ENCODE measurements at regions of chr6 and their contacts with region 1.

Region 1: DNA sequence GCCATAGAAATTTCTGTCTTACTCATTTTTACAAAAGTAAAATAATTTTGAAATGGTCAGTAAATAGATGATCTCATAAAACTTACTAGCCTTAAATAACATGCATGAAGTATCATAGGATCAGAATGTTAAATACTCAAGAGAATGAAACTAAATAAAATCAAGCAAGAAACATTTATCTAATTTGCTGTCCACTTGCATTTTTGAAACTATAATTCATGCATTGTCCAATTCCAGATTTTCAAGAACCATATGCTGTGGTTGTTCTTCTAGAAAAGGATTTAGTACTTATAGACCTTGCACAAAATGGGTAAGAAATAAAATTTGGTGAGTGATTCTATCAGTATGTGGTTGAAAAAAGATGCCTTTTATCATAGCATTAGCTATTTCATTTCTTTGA is 107.0 kb downstream of the STXBP5 start:
- DNase-seq: no peak
- ATAC-seq: no peak
- H3K4me3 ChIP-seq: no peak overlapping the region
- H3K27ac ChIP-seq: no peak overlapping the region
- H3K4me1 ChIP-seq: no peaks in the 10 kb centered on the region
- H3K27me3 ChIP-seq: no peaks in the 10 kb centered on the region
- CTCF ChIP-seq: no peak
- POLR2A ChIP-seq: no peak

Region 2: DNA sequence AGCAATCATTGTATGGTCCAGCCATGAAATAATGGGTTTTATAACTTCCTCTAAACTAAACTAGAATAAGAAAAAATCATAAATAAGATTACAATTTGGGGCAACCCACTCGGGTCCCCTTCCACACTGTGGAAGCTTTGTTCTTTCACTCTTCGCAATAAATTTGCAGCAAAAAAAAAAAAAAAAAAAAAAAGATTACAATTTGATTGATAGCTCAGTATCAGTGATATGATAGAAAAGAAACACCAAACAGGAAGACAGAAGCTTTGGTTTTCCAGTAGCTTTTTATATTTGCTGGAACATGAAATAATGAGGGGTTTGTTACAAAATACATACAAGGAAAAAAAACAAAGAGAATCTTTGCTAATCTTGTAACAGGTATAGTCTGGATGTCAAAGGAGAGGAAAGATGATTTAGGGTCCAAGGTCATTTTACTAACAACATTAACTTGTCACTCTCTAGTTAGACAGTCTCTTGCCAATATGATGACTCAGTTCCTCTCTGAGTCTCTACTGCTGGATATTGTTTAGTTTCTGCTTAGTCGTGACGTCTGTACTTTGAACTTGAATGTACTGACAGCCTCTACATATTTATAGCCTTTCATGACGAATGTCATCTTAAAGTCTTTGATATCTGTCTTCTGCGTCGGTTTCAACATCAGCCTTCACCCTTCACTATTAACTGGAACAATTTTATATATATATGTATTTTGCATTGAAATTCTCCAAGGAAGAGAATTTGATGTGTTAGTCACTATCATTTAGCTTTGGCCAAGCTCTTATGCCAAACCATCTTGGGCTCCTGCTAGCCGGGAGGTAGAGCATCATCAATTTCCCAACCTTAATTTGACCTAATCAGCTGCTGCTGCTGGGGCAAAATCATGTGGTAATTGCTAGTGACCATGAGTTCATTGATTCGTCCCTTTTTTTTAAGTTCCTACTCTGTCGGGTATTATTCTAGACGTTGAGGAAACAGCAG is 320.1 kb before region 1 on chr6:
- intact Hi-C with region 1: loop called in 1 of 10 experiments (anchors 5 kb)
- DNase-seq: no peak
- ATAC-seq: peak in 2 of 4 donors; percentile 44 to 49
- H3K4me3 ChIP-seq: no peak overlapping the region
- H3K27ac ChIP-seq: no peak overlapping the region
- H3K4me1 ChIP-seq: no peaks in the 10 kb centered on the region
- H3K27me3 ChIP-seq: no peaks in the 10 kb centered on the region
- CTCF ChIP-seq: no peak
- POLR2A ChIP-seq: no peak

Region 3: GRCh38 chr6:147604373-147604772 is 293.2 kb after region 1 on chr6:
- intact Hi-C with region 1: no loop called
- DNase-seq: no peak
- ATAC-seq: no peak
- H3K4me3 ChIP-seq: no peak overlapping the region
- H3K27ac ChIP-seq: peak overlapping the region in 9 of 12 donors; percentile 59 to 77 (median 68)
- H3K4me1 ChIP-seq: peaks cover 0 to 20% (median 1%) of the 10 kb centered on the region in 12 donors
- H3K27me3 ChIP-seq: no peaks in the 10 kb centered on the region
- CTCF ChIP-seq: no peak
- POLR2A ChIP-seq: no peak